Left colon (tissue), 2 donors: ENCODE measurements at regions of chr16 and their contacts with region 1.

Region 1: GRCh38 chr16:58137581-58137980 is 8.4 kb upstream of the CFAP20 start:
- DNase-seq: no peak
- ATAC-seq: no peak

Region 2: DNA sequence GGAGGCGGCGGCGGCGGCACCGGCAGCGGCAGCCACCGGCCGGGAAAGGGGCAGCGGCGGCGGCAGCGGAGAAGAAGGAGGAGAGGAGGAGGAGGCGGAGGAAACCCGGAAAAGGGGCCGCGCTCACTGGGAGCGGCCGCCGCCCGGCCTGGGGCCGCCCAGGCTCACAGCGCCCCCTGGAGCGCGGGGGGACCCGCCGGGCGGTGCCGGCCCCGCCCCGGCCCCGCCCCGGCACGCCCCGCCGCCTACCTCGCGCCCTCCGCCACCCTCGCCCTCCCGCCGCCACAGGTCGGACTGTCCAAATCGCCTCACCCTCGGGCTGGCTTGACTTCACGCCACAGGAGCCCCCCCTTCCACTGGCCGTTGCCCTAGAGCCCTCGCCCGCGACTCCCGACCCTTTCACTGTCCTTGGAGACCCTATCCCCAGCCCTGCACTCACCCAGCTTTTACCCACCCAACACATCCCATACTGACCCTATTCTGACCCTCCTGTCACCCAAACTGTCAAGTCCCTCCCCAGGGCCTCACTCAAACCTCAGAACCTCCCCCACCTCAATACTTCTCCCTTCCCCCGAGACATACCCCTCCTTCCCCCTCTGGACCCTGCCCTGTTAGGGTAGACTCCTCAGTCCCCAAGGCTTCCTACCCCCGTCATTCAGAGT is 60.6 kb after region 1 on chr16 and contains the start of gene CSNK2A2:
- intact Hi-C with region 1: loop called in 1 of 2 experiments (anchors 10 kb)
- DNase-seq: peak; percentile 69 to 80
- ATAC-seq: peak; percentile 96
- total RNA-seq, gene CSNK2A2: 47.5 to 53.8 TPM

Region 3: DNA sequence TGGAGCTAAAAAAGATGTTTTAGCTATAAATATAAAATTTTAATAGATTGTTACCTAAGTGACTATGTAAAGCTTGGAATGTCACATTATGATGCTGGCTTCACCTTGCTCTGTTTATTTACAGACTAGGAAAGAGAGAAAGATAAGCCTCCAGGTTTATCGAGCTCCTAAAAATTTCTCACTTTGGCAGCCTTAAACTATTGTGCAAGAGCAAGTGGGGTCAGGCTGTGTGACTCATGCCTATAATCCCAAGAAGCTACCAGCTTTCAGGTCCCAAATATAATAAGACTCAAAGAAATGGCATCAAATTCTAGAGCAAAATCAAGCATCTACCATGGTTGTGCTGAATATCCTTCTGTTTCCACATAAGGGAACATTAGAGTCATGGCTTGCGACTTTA is 191.6 kb after region 1 on chr16:
- intact Hi-C with region 1: no loop called
- DNase-seq: no peak
- ATAC-seq: no peak